Heart left ventricle (tissue), 16 donors: ENCODE measurements at regions of chr17 and their contacts with region 1.

Region 1: DNA sequence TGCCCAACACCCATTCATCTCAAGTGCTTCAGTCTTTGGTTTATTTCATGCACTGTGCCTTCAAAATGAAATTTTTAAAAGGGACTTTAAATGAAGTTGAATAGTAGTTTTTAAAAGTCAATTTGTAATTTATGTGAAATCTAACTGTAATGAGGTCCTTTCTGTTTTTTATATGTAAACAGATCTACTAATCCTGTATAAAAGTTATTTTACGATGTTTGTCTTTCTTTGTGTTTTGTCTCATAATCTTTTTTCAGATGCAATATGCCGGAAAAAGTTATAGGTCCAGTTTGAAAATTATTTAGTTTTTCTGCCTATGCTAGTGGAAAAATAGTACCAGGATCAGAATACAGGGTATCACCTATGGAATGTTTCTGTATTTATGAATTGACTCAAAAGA is 8.7 kb upstream of the GOSR1 start:
- DNase-seq: no peak
- ATAC-seq: no peak
- H3K4me3 ChIP-seq: no peak overlapping the region
- H3K27ac ChIP-seq: no peak overlapping the region
- H3K4me1 ChIP-seq: peaks cover 0 to 7% (median 0%) of the 10 kb centered on the region in 12 donors
- H3K27me3 ChIP-seq: no peaks in the 10 kb centered on the region
- CTCF ChIP-seq: no peak
- POLR2A ChIP-seq: no peak

Region 2: DNA sequence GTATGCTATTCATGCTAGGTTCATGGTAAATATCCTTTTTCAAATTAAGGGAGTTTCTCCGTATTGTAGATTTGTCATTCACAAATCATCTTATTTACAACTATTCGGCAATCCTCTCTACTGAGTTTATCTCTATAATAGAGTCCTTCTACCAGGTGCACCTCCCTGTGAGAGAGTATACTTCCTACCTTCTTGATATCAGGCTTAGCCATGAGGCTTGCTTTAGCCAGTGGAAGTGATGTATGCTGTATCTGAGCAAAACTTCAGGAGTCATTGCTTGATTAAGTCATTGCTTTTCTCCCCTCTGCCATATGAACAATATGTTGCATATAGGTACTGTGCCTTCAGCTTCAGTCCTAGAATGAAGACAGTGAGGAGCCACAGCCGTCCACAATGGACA is 331.3 kb before region 1 on chr17:
- intact Hi-C with region 1: no loop called
- DNase-seq: no peak
- ATAC-seq: no peak
- H3K4me3 ChIP-seq: no peak overlapping the region
- H3K27ac ChIP-seq: no peak overlapping the region
- H3K4me1 ChIP-seq: peaks cover 0 to 29% (median 7%) of the 10 kb centered on the region in 12 donors
- H3K27me3 ChIP-seq: no peaks in the 10 kb centered on the region
- CTCF ChIP-seq: no peak
- POLR2A ChIP-seq: no peak

Region 3: DNA sequence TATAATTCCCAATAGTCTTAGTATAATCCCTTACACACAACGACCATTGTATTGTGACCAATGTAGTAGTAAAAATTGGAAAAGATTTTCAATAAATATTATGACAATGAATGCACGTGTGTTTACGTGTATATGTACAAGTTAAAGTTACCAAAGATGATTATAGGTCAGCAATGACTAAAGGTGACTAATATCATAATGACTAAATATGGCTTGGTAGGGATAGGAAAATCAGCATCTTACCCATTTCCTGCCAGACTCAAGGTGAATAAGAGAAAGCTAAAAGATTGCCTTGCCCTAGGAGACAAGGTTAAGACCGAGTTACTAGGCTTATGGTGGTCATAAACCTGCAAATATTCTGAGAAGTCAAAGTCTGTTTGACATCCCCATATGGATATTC is 55.4 kb before region 1 on chr17:
- intact Hi-C with region 1: no loop called
- DNase-seq: no peak
- ATAC-seq: no peak
- H3K4me3 ChIP-seq: no peak overlapping the region
- H3K27ac ChIP-seq: no peak overlapping the region
- H3K4me1 ChIP-seq: peaks cover 0 to 4% (median 0%) of the 10 kb centered on the region in 12 donors
- H3K27me3 ChIP-seq: no peaks in the 10 kb centered on the region
- CTCF ChIP-seq: no peak
- POLR2A ChIP-seq: no peak

Region 4: GRCh38 chr17:30519707-30520106 is 51.2 kb after region 1 on chr17:
- intact Hi-C with region 1: loop called in 1 of 10 experiments (anchors 10 kb)
- DNase-seq: no peak
- ATAC-seq: peak in 3 of 4 donors; percentile 27 to 80 (median 71)
- H3K4me3 ChIP-seq: peak overlapping the region in 1 of 12 donors; percentile 24
- H3K27ac ChIP-seq: peak overlapping the region in 7 of 12 donors; percentile 23 to 61 (median 31)
- H3K4me1 ChIP-seq: peaks cover 0 to 26% (median 11%) of the 10 kb centered on the region in 12 donors
- H3K27me3 ChIP-seq: no peaks in the 10 kb centered on the region
- CTCF ChIP-seq: no peak
- POLR2A ChIP-seq: no peak

Region 5: DNA sequence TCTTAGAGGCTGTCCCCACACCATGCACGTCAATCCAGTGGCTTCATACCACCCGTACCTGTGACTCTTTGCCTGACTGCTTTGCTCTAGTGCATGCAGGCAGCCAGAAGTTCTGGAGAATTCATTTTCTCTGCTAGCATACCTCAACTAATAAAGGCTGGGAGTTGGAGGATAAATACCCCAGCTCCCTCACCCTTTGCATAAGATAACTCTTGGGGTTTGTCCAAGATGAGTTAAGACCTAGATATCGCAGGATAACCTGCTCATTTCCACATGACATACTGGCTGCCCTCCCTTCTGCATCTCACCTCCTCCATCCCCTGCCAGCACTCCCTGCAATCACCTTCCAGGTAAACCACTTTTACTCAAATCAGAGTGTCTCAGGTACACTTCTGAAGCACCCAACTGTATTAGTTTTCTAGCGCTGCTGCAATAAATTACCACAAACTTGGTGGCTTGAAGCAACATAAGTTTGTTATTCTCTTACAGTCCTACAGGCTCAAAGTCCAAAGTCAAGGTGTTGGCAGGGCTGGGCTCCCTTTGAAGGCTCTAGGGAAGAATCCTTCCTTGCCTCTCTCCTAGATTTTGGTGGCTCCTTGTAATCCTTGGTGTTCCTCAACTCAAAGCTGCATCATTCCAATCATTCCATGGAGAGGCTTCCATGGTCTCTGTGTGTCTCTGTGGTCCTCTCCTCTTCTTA is 209.2 kb after region 1 on chr17:
- intact Hi-C with region 1: no loop called
- DNase-seq: no peak
- ATAC-seq: no peak
- H3K4me3 ChIP-seq: no peak overlapping the region
- H3K27ac ChIP-seq: no peak overlapping the region
- H3K4me1 ChIP-seq: no peaks in the 10 kb centered on the region
- H3K27me3 ChIP-seq: peaks cover 0 to 3% (median 0%) of the 10 kb centered on the region in 9 donors
- CTCF ChIP-seq: no peak
- POLR2A ChIP-seq: no peak